K562 (cell line): ENCODE measurements at regions of chr11 and their contacts with region 1.

Region 1: GRCh38 chr11:32583459-32584271 is at the start of gene EIF3M:
- DNase-seq: peak; percentile 93 to 99 (median 94)
- ATAC-seq: peak; percentile 97
- H3K4me3 ChIP-seq: peak within 1 kb of the TSS; percentile 98
- H3K27ac ChIP-seq: peak within 1 kb of the TSS; percentile 87
- H3K4me1 ChIP-seq: peaks cover 0 to 14% of the 10 kb centered on the region in 2 experiments; a peak in 4 of 5 replicates
- H3K27me3 ChIP-seq: no peaks in the 10 kb centered on the region
- CTCF ChIP-seq: no peak
- EP300 ChIP-seq: no peak
- POLR2A ChIP-seq: peak; percentile 96
- RAD21 ChIP-seq: no peak
- polyA plus RNA-seq, gene EIF3M: 1,793 to 2,015 TPM

Region 2: GRCh38 chr11:32385998-32386397 is 197.7 kb before region 1 on chr11:
- CTCF ChIA-PET with region 1: no interaction called
- POLR2A ChIA-PET with region 1: no interaction called
- in situ Hi-C with region 1: loop called (anchors 10 kb)
- intact Hi-C with region 1: no loop called
- DNase-seq: peak; percentile 53 to 68 (median 60)
- ATAC-seq: peak; percentile 86
- H3K4me3 ChIP-seq: no peak overlapping the region
- H3K27ac ChIP-seq: peak overlapping the region; percentile 59
- H3K4me1 ChIP-seq: peaks cover 4 to 30% of the 10 kb centered on the region in 2 experiments
- H3K27me3 ChIP-seq: no peaks in the 10 kb centered on the region
- CTCF ChIP-seq: peak; percentile 50 to 68 (median 67)
- EP300 ChIP-seq: peak; percentile 5; the same call in 1 of the 2 replicates
- POLR2A ChIP-seq: no peak
- RAD21 ChIP-seq: peak; percentile 50 to 72

Region 3: DNA sequence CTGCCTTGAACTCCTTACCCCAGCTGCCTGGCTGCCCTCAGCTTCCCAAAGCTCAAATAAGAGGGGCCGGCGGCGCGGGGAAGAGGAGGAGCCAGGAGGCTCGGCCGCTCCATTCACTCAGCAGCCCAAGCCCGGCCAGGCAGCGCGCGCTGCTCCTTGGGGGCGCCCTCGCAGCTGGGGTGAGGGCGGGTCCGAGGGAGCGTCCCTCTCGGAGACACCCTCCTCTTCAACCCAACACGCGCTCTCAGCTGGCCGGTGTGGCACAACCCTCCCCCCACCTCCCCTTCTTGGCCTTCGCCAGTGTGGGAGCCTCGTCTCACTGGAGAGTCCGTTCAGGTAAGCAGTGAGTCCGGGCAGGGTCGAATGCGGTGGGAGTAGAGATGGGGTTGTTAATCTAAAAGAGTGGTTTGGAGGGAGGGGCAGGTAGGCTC is 148.1 kb before region 1 on chr11 and contains the start of gene WT1:
- CTCF ChIA-PET with region 1: no interaction called
- POLR2A ChIA-PET with region 1: interaction called, 4 read pairs
- in situ Hi-C with region 1: no loop called
- intact Hi-C with region 1: loop called (anchors 5 kb)
- DNase-seq: peak; percentile 84 to 90 (median 85)
- ATAC-seq: peak; percentile 83
- H3K4me3 ChIP-seq: peak within 1 kb of the TSS; percentile 76
- H3K27ac ChIP-seq: peak within 1 kb of the TSS; percentile 92
- H3K4me1 ChIP-seq: peaks cover 14 to 47% of the 10 kb centered on the region in 2 experiments; a peak in 4 of 5 replicates
- H3K27me3 ChIP-seq: no peaks in the 10 kb centered on the region
- CTCF ChIP-seq: no peak; a peak in 1 of 6 replicates
- EP300 ChIP-seq: 0 out of 2 replicates have a peak, but pooled peaks have one; percentile 15
- POLR2A ChIP-seq: peak; percentile 71
- RAD21 ChIP-seq: no peak; a peak in 2 of 4 replicates
- polyA plus RNA-seq, gene WT1: 7.1 to 7.7 TPM

Region 4: DNA sequence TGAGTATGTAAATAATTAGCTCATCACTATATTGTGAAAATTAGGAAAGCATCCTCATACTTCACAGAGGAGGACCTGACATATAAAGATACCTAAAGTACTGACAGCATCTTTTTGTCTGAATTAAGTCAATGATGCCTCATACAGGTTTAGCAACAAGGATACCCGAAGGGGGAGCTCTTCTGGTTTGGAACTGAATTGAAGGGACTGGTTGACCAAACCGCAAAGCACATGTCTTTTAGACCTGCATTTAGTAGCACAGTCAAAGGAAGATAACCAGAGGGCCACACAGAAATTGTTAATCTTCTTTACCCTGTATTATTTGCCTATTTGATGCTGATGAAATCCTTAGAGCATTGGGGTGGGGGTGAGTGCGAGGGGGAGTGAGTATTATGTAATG is 135.4 kb before region 1 on chr11:
- CTCF ChIA-PET with region 1: no interaction called
- POLR2A ChIA-PET with region 1: no interaction called
- in situ Hi-C with region 1: no loop called
- intact Hi-C with region 1: no loop called
- DNase-seq: peak in 3 of 4 experiments; percentile 46 to 88 (median 69)
- ATAC-seq: peak; percentile 79
- H3K4me3 ChIP-seq: no peak overlapping the region
- H3K27ac ChIP-seq: no peak overlapping the region
- H3K4me1 ChIP-seq: peaks cover 13 to 27% of the 10 kb centered on the region in 2 experiments; a peak in 4 of 5 replicates
- H3K27me3 ChIP-seq: no peaks in the 10 kb centered on the region
- CTCF ChIP-seq: peak; percentile 65 to 70 (median 70)
- EP300 ChIP-seq: no peak
- POLR2A ChIP-seq: no peak
- RAD21 ChIP-seq: peak; percentile 51 to 70

Region 5: DNA sequence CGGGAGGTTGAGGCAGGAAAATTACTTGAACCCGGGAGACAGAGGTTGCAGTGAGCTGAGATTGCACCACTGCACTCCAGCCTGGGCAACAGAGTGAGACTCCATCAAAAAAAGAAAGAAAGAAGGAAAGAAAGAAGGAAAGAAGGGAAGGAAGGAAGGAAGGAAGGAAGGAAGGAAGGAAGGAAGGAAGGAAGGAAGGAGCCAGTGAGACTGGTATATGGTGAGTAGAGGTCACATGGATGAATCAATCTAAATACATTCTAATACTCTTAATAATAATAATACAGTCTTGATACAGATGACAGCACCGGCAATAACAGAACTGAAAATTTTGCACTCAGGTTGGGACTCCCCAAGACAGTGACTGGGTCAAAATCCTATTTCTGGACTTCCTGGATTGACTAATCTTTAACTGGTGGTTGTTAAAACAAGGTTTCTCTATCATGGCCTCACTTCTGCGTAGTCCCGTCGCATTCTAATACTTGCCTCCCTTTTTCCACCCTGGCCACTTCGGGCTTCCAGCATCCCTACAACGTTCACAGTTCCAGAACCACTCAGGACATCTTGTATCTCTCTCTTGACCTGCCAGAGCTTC is 53.6 kb before region 1 on chr11:
- CTCF ChIA-PET with region 1: no interaction called
- POLR2A ChIA-PET with region 1: no interaction called
- in situ Hi-C with region 1: no loop called
- intact Hi-C with region 1: loop called (anchors 2 kb)
- DNase-seq: no peak
- ATAC-seq: no peak
- H3K4me3 ChIP-seq: no peak overlapping the region
- H3K27ac ChIP-seq: no peak overlapping the region
- H3K4me1 ChIP-seq: peaks cover 0 to 2% of the 10 kb centered on the region in 2 experiments; a peak in 2 of 5 replicates
- H3K27me3 ChIP-seq: peaks cover 0 to 2% of the 10 kb centered on the region in 2 experiments; a peak in 1 of 5 replicates
- CTCF ChIP-seq: no peak
- EP300 ChIP-seq: no peak
- POLR2A ChIP-seq: no peak
- RAD21 ChIP-seq: no peak

Region 6: DNA sequence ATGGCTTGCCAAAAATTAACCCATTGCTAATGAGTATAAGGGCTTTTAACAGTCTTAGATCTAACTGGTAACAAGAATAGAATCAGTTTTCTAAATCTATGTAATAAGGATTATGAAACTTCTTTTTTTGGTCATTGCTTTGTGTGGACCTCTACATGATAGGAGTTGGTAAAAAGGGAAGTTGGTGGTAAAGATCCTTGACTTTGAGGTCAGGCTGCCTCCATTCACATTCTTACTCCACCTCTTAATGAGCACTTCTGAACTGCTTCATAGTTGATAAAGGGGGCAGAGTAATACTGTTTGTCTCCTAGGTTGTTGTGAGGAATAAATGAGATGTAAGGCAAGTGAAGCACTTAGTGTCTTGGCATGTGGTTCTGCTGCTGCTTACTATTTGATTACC is 10.6 kb after region 1 on chr11:
- CTCF ChIA-PET with region 1: no interaction called
- POLR2A ChIA-PET with region 1: interaction called, 12 read pairs
- in situ Hi-C with region 1: no loop called
- intact Hi-C with region 1: no loop called
- DNase-seq: no peak
- ATAC-seq: peak; percentile 30; the same call in 2 of the 3 replicates
- H3K4me3 ChIP-seq: no peak overlapping the region
- H3K27ac ChIP-seq: no peak overlapping the region
- H3K4me1 ChIP-seq: no peaks in the 10 kb centered on the region
- H3K27me3 ChIP-seq: no peaks in the 10 kb centered on the region
- CTCF ChIP-seq: no peak
- EP300 ChIP-seq: no peak
- POLR2A ChIP-seq: no peak
- RAD21 ChIP-seq: no peak

Region 7: GRCh38 chr11:32751381-32751780 is 167.7 kb after region 1 on chr11:
- CTCF ChIA-PET with region 1: no interaction called
- POLR2A ChIA-PET with region 1: no interaction called
- in situ Hi-C with region 1: no loop called
- intact Hi-C with region 1: no loop called
- DNase-seq: no peak
- ATAC-seq: peak; percentile 71
- H3K4me3 ChIP-seq: no peak overlapping the region
- H3K27ac ChIP-seq: no peak overlapping the region
- H3K4me1 ChIP-seq: no peaks in the 10 kb centered on the region
- H3K27me3 ChIP-seq: peaks cover 0 to 6% of the 10 kb centered on the region in 2 experiments; a peak in 1 of 5 replicates
- CTCF ChIP-seq: 0 out of 6 replicates have a peak, but pooled peaks of 1 of the 3 experiments have one; percentile 13
- EP300 ChIP-seq: no peak
- POLR2A ChIP-seq: no peak
- RAD21 ChIP-seq: no peak